ENCODE measurements at regions of chr9 and their contacts with region 1.

Region 1: GRCh38 chr9:110427497-110428104 is 89.9 kb upstream of the TXNDC8 start:
- DNase-seq: no peak
- ATAC-seq: peak; percentile 86
- H3K4me3 ChIP-seq: no peak overlapping the region
- H3K27ac ChIP-seq: no peak overlapping the region
- H3K4me1 ChIP-seq: no peaks in the 10 kb centered on the region
- H3K27me3 ChIP-seq: no peaks in the 10 kb centered on the region
- CTCF ChIP-seq: peak; percentile 76 to 79 (median 77)
- EP300 ChIP-seq: no peak
- POLR2A ChIP-seq: no peak
- RAD21 ChIP-seq: peak; percentile 53

Region 2: DNA sequence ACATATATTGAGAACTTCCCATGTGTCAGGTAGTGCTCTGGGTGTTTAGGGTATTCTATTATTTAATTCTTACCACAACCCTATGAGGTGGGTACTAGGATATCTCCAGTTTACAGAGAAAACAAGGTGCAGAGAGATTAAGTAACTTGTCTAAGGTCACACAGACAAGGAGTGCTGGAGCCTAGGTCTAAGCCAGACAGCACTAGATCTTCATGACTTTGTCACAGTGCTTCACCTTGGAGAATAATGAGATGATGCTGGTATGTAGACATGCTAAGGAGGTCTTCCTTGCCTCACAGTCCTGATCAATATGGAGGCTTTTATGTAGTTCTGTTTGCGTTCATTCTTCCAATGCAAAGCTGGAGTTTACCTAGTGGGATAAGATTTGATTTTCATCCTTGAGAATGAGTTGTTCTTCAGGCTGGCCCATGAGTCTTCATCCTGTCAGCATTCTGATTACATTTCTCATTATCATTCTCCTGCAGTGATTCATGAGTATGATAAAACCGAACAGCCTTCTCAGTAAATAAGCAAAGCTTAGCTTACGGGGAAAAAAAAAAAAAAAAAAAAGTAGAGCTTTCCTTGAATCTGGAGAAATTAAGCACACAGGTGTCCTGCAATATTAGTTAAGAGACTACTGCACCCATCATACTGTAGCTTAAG is 396.0 kb before region 1 on chr9:
- CTCF ChIA-PET with region 1: no interaction called
- POLR2A ChIA-PET with region 1: no interaction called
- RAD21 ChIA-PET with region 1: no interaction called
- SMC1A ChIA-PET with region 1: no interaction called
- in situ Hi-C with region 1: no loop called
- intact Hi-C with region 1: no loop called
- DNase-seq: no peak
- ATAC-seq: no peak
- H3K4me3 ChIP-seq: no peak overlapping the region
- H3K27ac ChIP-seq: no peak overlapping the region
- H3K4me1 ChIP-seq: no peaks in the 10 kb centered on the region
- H3K27me3 ChIP-seq: no peaks in the 10 kb centered on the region
- CTCF ChIP-seq: no peak
- EP300 ChIP-seq: no peak
- POLR2A ChIP-seq: no peak
- RAD21 ChIP-seq: no peak

Region 3: DNA sequence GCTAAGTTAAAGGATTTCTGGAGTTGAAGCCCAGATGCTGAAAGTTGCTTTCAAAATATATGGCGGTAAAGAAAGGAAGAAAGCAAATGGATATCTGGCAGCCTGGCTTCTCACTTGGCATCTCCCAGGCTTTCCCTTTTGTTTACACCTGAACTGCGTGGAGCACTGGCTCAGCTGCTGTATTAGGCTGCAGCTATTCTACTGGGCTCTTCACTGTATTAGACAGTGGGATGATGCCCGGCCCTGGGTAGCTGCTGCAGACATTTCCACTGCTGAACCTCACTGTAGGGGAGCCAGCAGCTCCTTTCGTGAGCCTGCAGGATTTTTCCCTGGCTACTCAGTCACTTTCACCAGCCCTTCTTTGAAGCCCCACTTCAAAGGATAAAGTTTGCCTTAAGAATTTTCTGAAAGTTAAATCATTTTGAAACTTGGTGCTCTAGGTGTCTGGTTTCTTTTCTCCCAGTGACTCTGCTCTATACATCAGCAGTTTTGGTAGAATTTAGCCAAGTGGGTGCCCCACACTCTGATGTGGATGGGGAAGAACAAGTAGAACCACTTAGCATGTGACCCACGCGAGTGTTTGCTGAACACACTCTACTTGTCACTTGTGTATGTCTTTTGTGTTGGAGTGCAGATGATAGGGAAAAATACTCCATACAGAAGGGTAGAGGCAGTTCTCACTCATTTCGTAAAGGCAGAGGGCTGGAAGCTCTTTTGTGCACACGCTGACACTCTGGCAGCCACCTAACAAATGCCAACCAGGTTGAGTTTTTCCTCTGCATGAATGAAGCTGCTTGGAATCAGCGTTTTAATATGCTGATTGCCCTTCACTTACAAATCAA is 269.6 kb before region 1 on chr9:
- CTCF ChIA-PET with region 1: no interaction called
- POLR2A ChIA-PET with region 1: no interaction called
- RAD21 ChIA-PET with region 1: no interaction called
- SMC1A ChIA-PET with region 1: no interaction called
- in situ Hi-C with region 1: no loop called
- intact Hi-C with region 1: no loop called
- DNase-seq: no peak
- ATAC-seq: peak; percentile 27
- H3K4me3 ChIP-seq: peak overlapping the region; percentile 7; the same call in 1 of the 2 replicates
- H3K27ac ChIP-seq: peak overlapping the region; percentile 4; the same call in 1 of the 2 replicates
- H3K4me1 ChIP-seq: peaks cover 57% of the 10 kb centered on the region
- H3K27me3 ChIP-seq: no peaks in the 10 kb centered on the region
- CTCF ChIP-seq: no peak
- EP300 ChIP-seq: no peak
- POLR2A ChIP-seq: no peak
- RAD21 ChIP-seq: no peak

Region 4: DNA sequence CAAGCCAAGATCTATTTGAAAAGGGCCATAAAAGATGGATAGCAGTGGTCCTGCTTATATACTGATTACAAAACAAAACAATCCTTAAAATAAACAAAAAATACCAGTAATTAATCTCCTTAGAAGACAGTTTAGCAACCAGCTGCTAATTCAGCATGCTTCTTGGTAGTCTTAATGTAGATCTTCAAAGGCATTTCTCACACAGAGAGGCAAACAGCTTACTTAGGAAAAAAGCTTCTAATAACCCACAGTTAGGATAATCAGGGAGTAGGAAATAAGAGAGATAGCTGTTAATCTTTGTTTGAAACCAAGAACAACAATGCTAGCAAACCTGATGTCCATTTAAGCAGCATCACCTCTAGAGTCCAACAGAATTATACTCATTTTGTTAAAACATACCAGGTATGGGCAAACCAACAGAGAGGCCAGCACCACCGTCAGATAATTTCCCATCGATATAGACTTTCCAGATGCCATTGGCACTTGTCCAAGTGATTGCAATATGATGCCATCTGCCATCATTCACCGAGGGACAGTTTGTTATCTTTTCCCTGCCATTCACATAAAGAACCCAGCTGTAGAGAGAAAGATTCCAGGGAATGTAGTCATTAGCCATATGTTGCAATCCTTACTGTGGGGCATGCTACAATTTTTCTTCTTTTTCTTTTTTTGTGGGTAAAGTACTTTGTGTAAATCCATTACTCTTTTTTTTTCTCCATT is 15.7 kb after region 1 on chr9:
- CTCF ChIA-PET with region 1: interaction called, 21 read pairs
- POLR2A ChIA-PET with region 1: no interaction called
- RAD21 ChIA-PET with region 1: no interaction called
- SMC1A ChIA-PET with region 1: no interaction called
- in situ Hi-C with region 1: no loop called
- intact Hi-C with region 1: no loop called
- DNase-seq: no peak
- ATAC-seq: no peak
- H3K4me3 ChIP-seq: no peak overlapping the region
- H3K27ac ChIP-seq: no peak overlapping the region
- H3K4me1 ChIP-seq: no peaks in the 10 kb centered on the region
- H3K27me3 ChIP-seq: no peaks in the 10 kb centered on the region; a peak in 2 of 4 replicates
- CTCF ChIP-seq: no peak
- EP300 ChIP-seq: no peak
- POLR2A ChIP-seq: no peak
- RAD21 ChIP-seq: no peak

Measured in GM12878 (cell line).